ENCODE measurements at regions of chr14 and their contacts with region 1.

Region 1: GRCh38 chr14:46596236-46596635 is 55.3 kb downstream of the RPL10L start:
- DNase-seq: no peak
- H3K4me3 ChIP-seq: no peak overlapping the region
- H3K27ac ChIP-seq: no peak overlapping the region
- H3K4me1 ChIP-seq: no peaks in the 10 kb centered on the region
- H3K27me3 ChIP-seq: no peaks in the 10 kb centered on the region
- CTCF ChIP-seq: no peak

Region 2: GRCh38 chr14:46250113-46250703 is 346.0 kb before region 1 on chr14:
- CTCF ChIA-PET with region 1: interaction called, 18 read pairs
- POLR2A ChIA-PET with region 1: no interaction called
- intact Hi-C with region 1: no loop called
- DNase-seq: peak in 1 of 2 experiments; percentile 36
- H3K4me3 ChIP-seq: no peak overlapping the region
- H3K27ac ChIP-seq: no peak overlapping the region
- H3K4me1 ChIP-seq: no peaks in the 10 kb centered on the region
- H3K27me3 ChIP-seq: no peaks in the 10 kb centered on the region
- CTCF ChIP-seq: peak; percentile 74